IMR-90 (cell line): ENCODE measurements at regions of chr14 and their contacts with region 1.

Region 1: DNA sequence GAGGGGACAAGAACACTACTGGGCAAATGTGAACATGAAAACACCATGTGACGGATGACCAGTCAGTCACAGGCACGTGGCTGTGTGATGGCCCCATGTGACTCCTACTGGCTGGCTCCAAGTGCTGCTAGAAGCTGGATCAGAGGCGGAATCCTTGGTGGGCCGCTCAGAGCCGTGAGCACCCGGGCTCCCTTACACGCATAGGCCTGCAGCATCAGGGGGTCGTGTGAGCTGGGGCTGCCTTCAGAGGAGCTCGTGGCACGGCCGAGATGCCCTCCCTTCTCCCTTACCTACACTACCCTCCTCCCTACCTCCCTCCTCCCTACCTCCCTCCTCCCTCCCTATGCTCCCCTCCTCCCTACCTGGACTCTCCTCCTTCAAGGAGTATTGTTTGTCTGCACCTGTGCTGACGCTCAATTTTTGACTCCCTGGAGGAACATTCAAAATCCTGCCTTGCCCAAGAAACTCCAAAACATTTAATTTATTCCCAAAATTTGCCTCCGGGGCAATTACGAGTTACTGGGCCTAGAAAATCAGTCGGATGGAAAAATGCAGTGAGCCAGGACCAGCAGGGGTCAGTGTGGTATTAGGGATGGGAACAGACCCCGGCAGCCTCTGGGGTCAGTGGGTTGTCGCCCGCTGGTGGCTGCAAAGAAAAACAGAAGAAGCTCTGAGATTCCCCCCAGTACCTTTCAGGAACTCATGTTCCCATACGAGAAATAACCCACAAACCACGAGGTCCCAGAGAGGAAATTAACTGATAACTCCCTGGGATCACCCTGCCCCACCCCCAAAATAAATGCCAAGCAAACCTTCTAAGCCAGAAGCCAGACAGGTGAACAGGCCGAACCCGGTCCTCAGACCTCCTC is 61.2 kb downstream of the C14orf132 start:
- DNase-seq: peak; percentile 83
- ATAC-seq: peak; percentile 28
- H3K4me3 ChIP-seq: no peak overlapping the region
- H3K27ac ChIP-seq: peak overlapping the region; percentile 60
- H3K4me1 ChIP-seq: peaks cover 21% of the 10 kb centered on the region
- H3K27me3 ChIP-seq: no peaks in the 10 kb centered on the region
- CTCF ChIP-seq: peak; percentile 99
- POLR2A ChIP-seq: peak; percentile 76
- RAD21 ChIP-seq: peak; percentile 100

Region 2: GRCh38 chr14:95561001-95561412 is 539.4 kb before region 1 on chr14:
- CTCF ChIA-PET with region 1: no interaction called
- POLR2A ChIA-PET with region 1: no interaction called
- dilution Hi-C with region 1: no loop called
- in situ Hi-C with region 1: no loop called
- intact Hi-C with region 1: loop called (anchors 1 kb)
- DNase-seq: peak; percentile 82
- ATAC-seq: peak; percentile 88
- H3K4me3 ChIP-seq: no peak overlapping the region
- H3K27ac ChIP-seq: no peak overlapping the region
- H3K4me1 ChIP-seq: no peaks in the 10 kb centered on the region
- H3K27me3 ChIP-seq: peaks cover 7% of the 10 kb centered on the region
- CTCF ChIP-seq: peak; percentile 98
- POLR2A ChIP-seq: no peak
- RAD21 ChIP-seq: peak; percentile 96

Region 3: DNA sequence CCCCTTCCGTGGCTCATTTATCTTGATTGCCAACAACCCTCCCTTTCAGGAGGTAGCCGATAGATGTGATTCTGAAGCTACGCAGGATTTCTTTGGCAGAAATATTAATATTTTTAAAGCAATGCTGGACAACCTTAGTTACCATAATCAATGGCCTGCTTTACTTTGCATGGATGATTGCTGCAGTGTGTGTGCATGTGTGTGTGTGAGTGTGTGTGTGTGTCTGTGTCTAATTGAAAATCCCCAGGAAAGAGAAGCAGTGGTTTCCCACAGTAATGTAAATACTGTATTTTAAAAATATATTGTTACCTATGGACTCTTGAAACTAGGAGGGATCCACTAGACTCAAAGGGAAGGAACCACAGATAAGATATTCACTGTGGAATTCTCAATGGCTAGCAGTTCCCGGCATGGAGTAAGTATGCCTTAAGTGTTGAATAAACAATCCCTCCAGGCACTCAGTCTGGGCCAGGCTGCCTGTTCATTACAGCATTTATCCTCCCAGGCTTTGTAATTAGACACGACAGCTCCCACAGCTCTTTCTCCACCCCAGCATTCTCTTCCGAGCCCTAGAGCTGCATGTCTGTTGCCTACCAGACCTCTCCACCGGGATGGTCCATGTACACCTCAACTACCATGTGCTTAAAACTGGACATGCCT is 83.8 kb before region 1 on chr14:
- CTCF ChIA-PET with region 1: interaction called, 3 read pairs
- POLR2A ChIA-PET with region 1: no interaction called
- dilution Hi-C with region 1: no loop called
- in situ Hi-C with region 1: no loop called
- intact Hi-C with region 1: loop called (anchors 5 kb)
- DNase-seq: peak; percentile 12
- ATAC-seq: peak; percentile 92
- H3K4me3 ChIP-seq: no peak overlapping the region
- H3K27ac ChIP-seq: no peak overlapping the region
- H3K4me1 ChIP-seq: no peaks in the 10 kb centered on the region
- H3K27me3 ChIP-seq: peaks cover 8% of the 10 kb centered on the region
- CTCF ChIP-seq: no peak
- POLR2A ChIP-seq: no peak
- RAD21 ChIP-seq: no peak

Region 4: DNA sequence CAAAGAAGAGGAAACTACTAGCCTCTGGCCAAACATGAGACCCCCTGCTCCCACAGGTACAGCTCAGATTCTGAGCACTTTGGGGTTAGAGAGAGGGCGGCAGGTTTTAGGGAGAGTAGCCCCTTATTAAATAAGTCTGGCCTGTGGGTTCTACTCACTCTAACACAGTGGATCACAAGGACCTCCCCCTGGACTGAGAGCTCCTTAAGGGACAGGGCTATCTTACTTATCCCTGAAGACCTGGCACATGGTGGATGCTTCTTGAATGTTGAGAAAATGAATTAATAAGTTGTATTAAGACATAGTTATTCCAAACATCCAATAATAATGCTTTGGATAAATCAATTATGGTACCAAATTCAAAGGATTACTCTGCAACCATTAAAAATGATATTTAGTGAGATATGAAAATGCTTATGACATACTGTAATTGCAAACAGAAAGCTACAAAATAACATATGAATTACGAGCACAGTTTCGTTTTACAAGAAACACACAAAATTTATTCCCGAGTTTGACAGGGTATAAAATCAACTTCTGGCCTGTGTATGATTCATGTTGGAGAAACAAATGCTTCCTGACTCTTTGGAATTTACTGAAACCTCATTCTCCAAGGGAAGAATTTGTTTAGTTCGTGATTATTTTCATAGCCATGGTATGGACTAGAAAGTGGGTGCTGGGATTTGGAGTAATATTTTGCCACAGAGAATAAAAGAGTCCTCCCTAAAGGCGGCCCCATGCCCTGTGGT is 44.9 kb after region 1 on chr14:
- CTCF ChIA-PET with region 1: interaction called, 4 read pairs
- POLR2A ChIA-PET with region 1: interaction called, 3 read pairs
- dilution Hi-C with region 1: no loop called
- in situ Hi-C with region 1: no loop called
- intact Hi-C with region 1: loop called (anchors 2 kb)
- DNase-seq: peak; percentile 91
- ATAC-seq: peak; percentile 86
- H3K4me3 ChIP-seq: peak overlapping the region; percentile 4; the same call in 1 of the 2 replicates
- H3K27ac ChIP-seq: peak overlapping the region; percentile 98
- H3K4me1 ChIP-seq: peaks cover 13% of the 10 kb centered on the region
- H3K27me3 ChIP-seq: no peaks in the 10 kb centered on the region
- CTCF ChIP-seq: no peak
- POLR2A ChIP-seq: no peak
- RAD21 ChIP-seq: 0 out of 2 replicates have a peak, but pooled peaks have one; percentile 22

Region 5: GRCh38 chr14:96268431-96269358 is 168.3 kb after region 1 on chr14:
- CTCF ChIA-PET with region 1: interaction called, 55 read pairs
- POLR2A ChIA-PET with region 1: interaction called, 6 read pairs
- dilution Hi-C with region 1: no loop called
- in situ Hi-C with region 1: loop called (anchors 5 kb)
- intact Hi-C with region 1: loop called (anchors 1 kb)
- DNase-seq: peak; percentile 99
- ATAC-seq: peak; percentile 76
- H3K4me3 ChIP-seq: no peak overlapping the region
- H3K27ac ChIP-seq: peak overlapping the region; percentile 75
- H3K4me1 ChIP-seq: peaks cover 38% of the 10 kb centered on the region
- H3K27me3 ChIP-seq: no peaks in the 10 kb centered on the region
- CTCF ChIP-seq: no peak
- POLR2A ChIP-seq: 0 out of 2 replicates have a peak, but pooled peaks have one; percentile 7
- RAD21 ChIP-seq: peak; percentile 29; the same call in 1 of the 2 replicates

Region 6: DNA sequence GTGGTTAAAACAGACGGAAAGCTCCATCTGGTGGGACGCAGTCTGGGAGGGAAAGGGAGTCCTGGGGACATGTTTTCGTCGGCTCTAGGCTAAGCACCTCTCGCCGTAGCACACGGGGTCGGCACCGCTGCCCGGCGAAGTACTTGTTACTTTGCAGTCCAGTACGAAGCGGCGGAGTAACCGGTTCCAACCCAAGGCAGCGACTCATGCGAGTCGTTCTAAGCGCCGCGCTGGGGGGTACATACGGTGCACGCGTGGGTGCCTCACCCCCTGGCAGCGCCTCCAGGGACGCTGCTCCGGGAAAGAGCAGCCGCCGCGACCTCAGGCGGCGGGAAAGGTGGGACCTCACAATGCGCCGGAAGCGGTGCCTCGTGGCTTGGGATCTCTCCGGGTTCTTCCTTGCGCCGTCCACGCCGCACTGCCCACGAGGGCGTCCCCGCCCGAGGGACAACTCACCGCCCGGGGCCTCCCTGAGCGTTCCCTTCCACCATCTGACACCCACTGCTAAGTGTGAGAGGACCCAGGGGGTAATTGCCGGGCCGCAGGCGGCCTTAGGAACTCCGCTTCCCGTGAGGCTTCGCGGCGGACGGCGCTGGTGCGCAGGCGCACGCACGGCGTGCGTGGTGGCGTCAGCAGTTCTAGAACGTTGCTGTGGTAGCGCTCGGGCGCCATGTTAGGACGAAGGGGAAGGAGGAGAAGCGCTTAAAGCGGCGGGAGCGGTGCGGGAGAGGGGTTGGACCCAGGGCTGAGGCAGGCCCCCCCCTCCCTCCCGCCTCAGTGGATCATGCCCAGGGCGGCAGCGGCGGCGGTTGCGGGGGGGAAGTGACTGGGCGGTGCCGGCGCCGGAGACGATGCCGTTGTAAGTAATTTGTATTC is 401.6 kb after region 1 on chr14 and contains the start of gene PAPOLA:
- CTCF ChIA-PET with region 1: no interaction called
- POLR2A ChIA-PET with region 1: no interaction called
- dilution Hi-C with region 1: no loop called
- in situ Hi-C with region 1: no loop called
- intact Hi-C with region 1: loop called (anchors 10 kb)
- DNase-seq: peak; percentile 95
- ATAC-seq: peak; percentile 94
- H3K4me3 ChIP-seq: peak within 1 kb of the TSS; percentile 76
- H3K27ac ChIP-seq: peak within 1 kb of the TSS; percentile 86
- H3K4me1 ChIP-seq: peaks cover 3% of the 10 kb centered on the region; the same call in 1 of the 2 replicates
- H3K27me3 ChIP-seq: no peaks in the 10 kb centered on the region
- CTCF ChIP-seq: peak; percentile 14; the same call in 1 of the 2 replicates
- POLR2A ChIP-seq: peak; percentile 93
- RAD21 ChIP-seq: no peak
- total RNA-seq, gene PAPOLA: 128 and 137 TPM in 2 replicates

Region 7: GRCh38 chr14:97319691-97320090 is 1219.3 kb after region 1 on chr14:
- CTCF ChIA-PET with region 1: no interaction called
- POLR2A ChIA-PET with region 1: no interaction called
- dilution Hi-C with region 1: no loop called
- in situ Hi-C with region 1: no loop called
- intact Hi-C with region 1: no loop called
- DNase-seq: no peak
- ATAC-seq: no peak
- H3K4me3 ChIP-seq: no peak overlapping the region
- H3K27ac ChIP-seq: no peak overlapping the region
- H3K4me1 ChIP-seq: no peaks in the 10 kb centered on the region
- H3K27me3 ChIP-seq: no peaks in the 10 kb centered on the region
- CTCF ChIP-seq: no peak
- POLR2A ChIP-seq: no peak
- RAD21 ChIP-seq: no peak